Activated B cell treated with CpG ODN at 0.5 μM for 24 hours (primary cell): ENCODE measurements at regions of chr5 and their contacts with region 1.

Region 1: GRCh38 chr5:100903039-100903887 is at the start of gene ST8SIA4:
- DNase-seq: peak; percentile 77
- ATAC-seq: peak; percentile 71
- H3K4me3 Mint-ChIP-seq: peak within 1 kb of the TSS; percentile 99
- H3K27ac Mint-ChIP-seq: peak within 1 kb of the TSS; percentile 99
- H3K4me1 Mint-ChIP-seq: peaks cover 46% of the 10 kb centered on the region
- H3K27me3 Mint-ChIP-seq: no peaks in the 10 kb centered on the region
- CTCF ChIP-seq: no peak
- total RNA-seq, gene ST8SIA4: 105 and 125 TPM in 2 replicates

Region 2: DNA sequence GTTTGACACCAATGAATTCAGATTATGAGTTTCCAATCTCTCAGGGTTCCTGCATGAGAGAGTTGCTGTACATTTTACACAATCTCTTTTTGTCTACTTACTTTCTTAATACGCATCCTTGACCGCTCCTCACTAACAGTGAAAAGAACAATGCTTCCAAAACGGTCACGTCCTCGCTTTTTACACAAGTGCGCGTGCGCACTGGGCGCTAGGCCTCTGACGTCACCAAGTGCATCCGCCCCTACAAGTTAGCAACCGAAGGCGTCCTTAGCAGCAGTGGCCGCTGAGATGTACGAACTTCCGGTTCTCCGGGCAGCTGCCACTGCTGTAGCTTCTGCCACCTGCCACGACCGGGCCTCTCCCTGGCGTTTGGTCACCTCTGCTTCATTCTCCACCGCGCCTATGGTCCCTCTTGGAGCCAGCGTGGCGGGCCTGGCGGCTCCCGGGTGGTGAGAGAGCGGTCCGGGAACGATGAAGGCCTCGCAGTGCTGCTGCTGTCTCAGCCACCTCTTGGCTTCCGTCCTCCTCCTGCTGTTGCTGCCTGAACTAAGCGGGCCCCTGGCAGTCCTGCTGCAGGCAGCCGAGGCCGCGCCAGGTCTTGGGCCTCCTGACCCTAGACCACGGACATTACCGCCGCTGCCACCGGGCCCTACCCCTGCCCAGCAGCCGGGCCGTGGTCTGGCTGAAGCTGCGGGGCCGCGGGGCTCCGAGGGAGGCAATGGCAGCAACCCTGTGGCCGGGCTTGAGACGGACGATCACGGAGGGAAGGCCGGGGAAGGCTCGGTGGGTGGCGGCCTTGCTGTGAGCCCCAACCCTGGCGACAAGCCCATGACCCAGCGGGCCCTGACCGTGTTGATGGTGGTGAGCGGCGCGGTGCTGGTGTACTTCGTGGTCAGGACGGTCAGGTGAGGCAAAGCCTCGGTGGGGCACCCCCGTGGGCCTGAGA is 367.9 kb before region 1 on chr5 and contains the start of gene FAM174A:
- CTCF ChIA-PET with region 1: no interaction called
- POLR2A ChIA-PET with region 1: interaction called, 17 read pairs
- intact Hi-C with region 1: loop called (anchors 1 kb)
- DNase-seq: peak; percentile 87
- ATAC-seq: peak; percentile 91
- H3K4me3 Mint-ChIP-seq: peak within 1 kb of the TSS; percentile 99
- H3K27ac Mint-ChIP-seq: peak within 1 kb of the TSS; percentile 91
- H3K4me1 Mint-ChIP-seq: peaks cover 21% of the 10 kb centered on the region
- H3K27me3 Mint-ChIP-seq: peaks cover 2% of the 10 kb centered on the region
- CTCF ChIP-seq: no peak
- total RNA-seq, gene FAM174A: 4.1 and 5.2 TPM in 2 replicates

Region 3: DNA sequence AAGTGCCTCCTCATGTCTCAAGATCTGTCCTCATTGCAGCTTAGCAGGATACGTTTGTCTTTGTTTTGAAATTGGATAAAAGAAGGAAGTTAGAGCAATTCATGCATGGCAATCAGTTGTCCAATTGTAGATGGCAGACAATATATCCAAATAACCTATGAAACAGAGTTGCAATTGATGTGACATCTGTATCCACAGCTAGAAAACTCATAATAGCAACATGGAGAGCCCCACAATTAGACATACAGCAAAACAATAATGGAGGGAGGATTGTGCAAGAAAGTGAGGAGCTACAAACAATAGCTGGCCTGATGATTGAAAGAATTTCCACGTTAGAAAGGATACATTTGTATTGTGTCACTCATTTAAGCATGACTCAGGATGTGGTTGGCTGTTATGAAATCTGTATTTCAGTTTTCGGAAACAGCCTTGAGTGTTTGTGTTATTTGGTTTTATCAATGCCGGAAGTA is 236.1 kb before region 1 on chr5:
- CTCF ChIA-PET with region 1: no interaction called
- POLR2A ChIA-PET with region 1: no interaction called
- intact Hi-C with region 1: no loop called
- DNase-seq: no peak
- ATAC-seq: no peak
- H3K4me3 Mint-ChIP-seq: no peak overlapping the region
- H3K27ac Mint-ChIP-seq: no peak overlapping the region
- H3K4me1 Mint-ChIP-seq: peaks cover 3% of the 10 kb centered on the region
- H3K27me3 Mint-ChIP-seq: peaks cover 3% of the 10 kb centered on the region
- CTCF ChIP-seq: no peak

Region 4: DNA sequence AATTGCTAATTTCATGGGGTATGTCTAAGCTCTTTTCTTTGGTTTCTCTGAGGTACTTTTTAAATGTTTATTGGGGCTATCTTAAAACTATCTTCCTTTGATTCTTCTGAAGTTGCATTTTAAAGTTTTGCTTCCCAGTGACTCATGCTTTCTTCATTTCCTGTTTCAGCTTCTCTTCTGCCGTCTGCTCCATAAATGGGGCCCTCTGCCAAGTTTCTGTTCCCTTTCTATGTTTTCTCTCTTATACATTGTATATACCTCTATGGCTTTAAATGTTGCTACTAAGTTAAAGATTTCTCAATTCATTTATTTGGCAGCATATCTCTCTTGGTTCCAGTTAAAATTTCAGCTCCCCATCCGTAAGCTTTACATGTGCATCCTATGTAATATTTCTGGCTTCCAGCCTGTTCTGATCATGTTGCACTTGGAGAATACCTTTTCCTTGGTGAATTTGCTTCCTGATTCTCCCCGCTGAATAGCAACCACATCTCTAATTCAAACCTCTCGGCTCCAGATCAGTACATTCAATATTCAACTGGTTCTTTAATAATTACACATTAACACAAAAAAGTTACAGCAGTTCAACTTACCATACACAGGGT is 125.5 kb before region 1 on chr5:
- CTCF ChIA-PET with region 1: interaction called, 39 read pairs
- POLR2A ChIA-PET with region 1: interaction called, 202 read pairs
- intact Hi-C with region 1: loop called (anchors 1 kb)
- DNase-seq: no peak
- ATAC-seq: peak; percentile 65
- H3K4me3 Mint-ChIP-seq: peak overlapping the region; percentile 69
- H3K27ac Mint-ChIP-seq: peak overlapping the region; percentile 88
- H3K4me1 Mint-ChIP-seq: peaks cover 60% of the 10 kb centered on the region
- H3K27me3 Mint-ChIP-seq: no peaks in the 10 kb centered on the region
- CTCF ChIP-seq: no peak

Region 5: GRCh38 chr5:100840384-100840783 is 62.9 kb before region 1 on chr5:
- CTCF ChIA-PET with region 1: interaction called, 16 read pairs
- POLR2A ChIA-PET with region 1: interaction called, 199 read pairs
- intact Hi-C with region 1: loop called (anchors 1 kb)
- DNase-seq: no peak
- ATAC-seq: peak; percentile 90
- H3K4me3 Mint-ChIP-seq: peak overlapping the region; percentile 63
- H3K27ac Mint-ChIP-seq: peak overlapping the region; percentile 86
- H3K4me1 Mint-ChIP-seq: peaks cover 84% of the 10 kb centered on the region
- H3K27me3 Mint-ChIP-seq: no peaks in the 10 kb centered on the region
- CTCF ChIP-seq: no peak

Region 6: DNA sequence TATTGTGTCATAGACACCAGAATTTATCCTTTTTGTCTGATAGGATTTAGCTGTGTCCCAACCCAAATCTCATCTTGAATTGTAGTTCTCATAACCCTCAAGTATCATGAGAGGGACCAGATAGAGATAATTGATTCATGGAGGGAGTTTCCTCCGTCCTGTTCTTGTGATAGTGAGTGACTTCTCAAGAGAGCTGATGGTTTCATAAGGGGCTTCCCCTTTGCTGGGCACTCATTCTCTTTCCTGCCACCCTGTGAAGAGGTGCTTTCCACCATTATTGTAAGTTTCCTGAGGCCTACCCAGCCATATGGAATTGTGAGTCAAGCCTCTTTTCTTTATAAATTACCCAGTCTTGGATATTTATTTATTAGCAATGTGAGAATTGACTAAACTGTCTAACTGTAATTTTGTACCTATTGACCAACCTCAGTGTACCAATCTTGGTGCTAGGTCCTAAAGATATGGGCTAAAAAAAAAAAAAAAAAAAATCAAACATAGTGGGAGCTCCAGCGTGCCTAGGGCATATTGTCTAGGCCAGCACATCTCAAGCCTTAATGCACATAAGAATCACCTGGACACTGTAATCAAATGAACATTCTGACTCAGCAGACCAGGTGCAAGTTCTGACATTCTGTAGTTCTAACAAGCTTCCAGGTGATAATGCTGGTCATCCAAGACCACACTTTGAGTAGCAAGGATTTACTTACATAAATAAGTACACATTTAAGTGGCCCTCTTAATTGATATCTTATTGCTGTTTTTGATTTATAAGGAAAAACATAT is 30.7 kb before region 1 on chr5:
- CTCF ChIA-PET with region 1: interaction called, 10 read pairs
- POLR2A ChIA-PET with region 1: interaction called, 92 read pairs
- intact Hi-C with region 1: loop called (anchors 1 kb)
- DNase-seq: no peak
- ATAC-seq: peak; percentile 87
- H3K4me3 Mint-ChIP-seq: peak overlapping the region; percentile 57
- H3K27ac Mint-ChIP-seq: peak overlapping the region; percentile 68
- H3K4me1 Mint-ChIP-seq: peaks cover 52% of the 10 kb centered on the region
- H3K27me3 Mint-ChIP-seq: no peaks in the 10 kb centered on the region
- CTCF ChIP-seq: no peak

Region 7: GRCh38 chr5:100939981-100940380 is 36.7 kb after region 1 on chr5:
- CTCF ChIA-PET with region 1: no interaction called
- POLR2A ChIA-PET with region 1: no interaction called
- intact Hi-C with region 1: no loop called
- DNase-seq: no peak
- ATAC-seq: no peak
- H3K4me3 Mint-ChIP-seq: no peak overlapping the region
- H3K27ac Mint-ChIP-seq: no peak overlapping the region
- H3K4me1 Mint-ChIP-seq: no peaks in the 10 kb centered on the region
- H3K27me3 Mint-ChIP-seq: no peaks in the 10 kb centered on the region
- CTCF ChIP-seq: no peak

Region 8: GRCh38 chr5:101024299-101024698 is 121.0 kb after region 1 on chr5:
- CTCF ChIA-PET with region 1: no interaction called
- POLR2A ChIA-PET with region 1: interaction called, 5 read pairs
- intact Hi-C with region 1: loop called (anchors 1 kb)
- DNase-seq: no peak
- ATAC-seq: peak; percentile 96
- H3K4me3 Mint-ChIP-seq: no peak overlapping the region
- H3K27ac Mint-ChIP-seq: no peak overlapping the region
- H3K4me1 Mint-ChIP-seq: peaks cover 13% of the 10 kb centered on the region
- H3K27me3 Mint-ChIP-seq: peaks cover under 1% of the 10 kb centered on the region
- CTCF ChIP-seq: no peak